ENCODE measurements at regions of chr1 and their contacts with region 1.

Region 1: DNA sequence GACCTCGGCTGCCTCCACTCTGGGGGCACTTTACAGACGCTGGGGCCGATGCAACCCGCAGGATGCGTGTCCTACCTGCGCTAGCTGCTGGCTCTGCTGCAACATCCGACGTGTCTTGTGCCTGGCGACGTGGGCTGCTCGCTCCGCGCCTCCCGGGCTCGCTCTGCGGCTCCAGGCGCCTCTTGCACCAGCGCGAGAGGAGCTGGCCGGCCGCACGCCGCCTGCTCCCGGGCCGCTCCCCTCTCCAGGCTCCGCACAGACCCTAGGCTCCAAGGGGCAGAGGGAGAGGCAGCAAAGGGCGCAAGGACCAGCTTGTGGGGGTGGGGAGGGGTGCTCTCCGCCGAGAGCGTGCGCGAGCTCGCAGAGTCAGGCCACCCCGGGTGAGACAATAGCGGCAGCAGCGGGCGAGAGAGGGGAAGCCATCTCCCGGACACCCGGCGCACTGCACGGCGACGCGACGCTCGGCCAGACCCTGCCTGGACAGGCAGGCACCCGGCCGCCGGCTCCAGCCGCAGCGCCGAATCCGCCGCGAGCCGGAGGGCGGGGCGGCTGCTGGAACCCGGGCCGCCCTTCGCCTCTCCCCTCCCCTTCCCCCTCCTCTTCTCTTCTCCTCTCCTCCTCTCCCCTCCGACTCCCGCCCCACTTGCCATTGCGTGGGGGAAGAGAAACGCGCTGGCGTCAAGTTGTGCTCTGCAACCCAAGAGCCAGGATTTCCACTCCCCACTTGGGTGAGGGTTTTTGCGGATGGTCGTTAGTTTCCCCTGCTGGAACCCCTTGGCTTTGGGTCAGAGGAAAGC is at the start of gene PIK3C2B:
- DNase-seq: peak; percentile 87
- ATAC-seq: peak; percentile 81
- H3K4me3 ChIP-seq: peak within 1 kb of the TSS; percentile 84 to 98 (median 92)
- H3K4me3 Mint-ChIP-seq: peak within 1 kb of the TSS; percentile 97
- H3K27ac ChIP-seq: peak within 1 kb of the TSS; percentile 78 to 79
- H3K27ac Mint-ChIP-seq: peak within 1 kb of the TSS; percentile 96
- H3K4me1 ChIP-seq: peaks cover 73 to 88% of the 10 kb centered on the region in 2 donors
- H3K4me1 Mint-ChIP-seq: peaks cover 80% of the 10 kb centered on the region
- H3K27me3 ChIP-seq: no peaks in the 10 kb centered on the region
- H3K27me3 Mint-ChIP-seq: no peaks in the 10 kb centered on the region
- CTCF ChIP-seq: peak; percentile 61
- total RNA-seq, gene PIK3C2B: 90.3 and 93.7 TPM in 2 replicates

Region 2: GRCh38 chr1:203638950-203639349 is 855.5 kb before region 1 on chr1:
- CTCF ChIA-PET with region 1: no interaction called
- POLR2A ChIA-PET with region 1: no interaction called
- intact Hi-C with region 1: no loop called
- DNase-seq: no peak
- ATAC-seq: no peak
- H3K4me3 ChIP-seq: no peak overlapping the region
- H3K4me3 Mint-ChIP-seq: no peak overlapping the region
- H3K27ac ChIP-seq: no peak overlapping the region
- H3K27ac Mint-ChIP-seq: no peak overlapping the region
- H3K4me1 ChIP-seq: peaks cover 10 to 12% of the 10 kb centered on the region in 2 donors
- H3K4me1 Mint-ChIP-seq: peaks cover 26% of the 10 kb centered on the region
- H3K27me3 ChIP-seq: no peaks in the 10 kb centered on the region
- H3K27me3 Mint-ChIP-seq: no peaks in the 10 kb centered on the region
- CTCF ChIP-seq: no peak

Region 3: GRCh38 chr1:204465546-204466415 is 28.7 kb before region 1 on chr1:
- CTCF ChIA-PET with region 1: interaction called, 1,884 read pairs
- POLR2A ChIA-PET with region 1: interaction called, 9 read pairs
- intact Hi-C with region 1: loop called (anchors 1 kb)
- DNase-seq: peak; percentile 57
- ATAC-seq: peak; percentile 49
- H3K4me3 ChIP-seq: peak overlapping the region in 1 of 5 experiments; percentile 2
- H3K4me3 Mint-ChIP-seq: peak overlapping the region; percentile 80
- H3K27ac ChIP-seq: peak overlapping the region; percentile 57 to 72
- H3K27ac Mint-ChIP-seq: peak overlapping the region; percentile 95
- H3K4me1 ChIP-seq: peaks cover 77 to 80% of the 10 kb centered on the region in 2 donors
- H3K4me1 Mint-ChIP-seq: peaks cover 84% of the 10 kb centered on the region
- H3K27me3 ChIP-seq: no peaks in the 10 kb centered on the region
- H3K27me3 Mint-ChIP-seq: no peaks in the 10 kb centered on the region
- CTCF ChIP-seq: no peak

Region 4: GRCh38 chr1:204480515-204480914 is 14.0 kb before region 1 on chr1:
- CTCF ChIA-PET with region 1: interaction called, 374 read pairs
- POLR2A ChIA-PET with region 1: interaction called, 46 read pairs
- intact Hi-C with region 1: loop called (anchors 1 kb)
- DNase-seq: peak; percentile 73
- ATAC-seq: peak; percentile 53
- H3K4me3 ChIP-seq: peak overlapping the region in 3 of 5 experiments; percentile 26 to 32 (median 32)
- H3K4me3 Mint-ChIP-seq: peak overlapping the region; percentile 71
- H3K27ac ChIP-seq: peak overlapping the region; percentile 78 to 95
- H3K27ac Mint-ChIP-seq: peak overlapping the region; percentile 98
- H3K4me1 ChIP-seq: peaks cover 93 to 94% of the 10 kb centered on the region in 2 donors
- H3K4me1 Mint-ChIP-seq: peaks cover 94% of the 10 kb centered on the region
- H3K27me3 ChIP-seq: no peaks in the 10 kb centered on the region
- H3K27me3 Mint-ChIP-seq: no peaks in the 10 kb centered on the region
- CTCF ChIP-seq: no peak

Region 5: GRCh38 chr1:204516180-204516879 is 21.9 kb after region 1 on chr1 and contains the start of gene MDM4:
- CTCF ChIA-PET with region 1: interaction called, 48 read pairs
- POLR2A ChIA-PET with region 1: interaction called, 15 read pairs
- intact Hi-C with region 1: no loop called
- DNase-seq: peak; percentile 97
- ATAC-seq: peak; percentile 78
- H3K4me3 ChIP-seq: peak within 1 kb of the TSS; percentile 75 to 96 (median 91)
- H3K4me3 Mint-ChIP-seq: no peak within 1 kb of the TSS
- H3K27ac ChIP-seq: peak within 1 kb of the TSS; percentile 95 to 97
- H3K27ac Mint-ChIP-seq: no peak within 1 kb of the TSS
- H3K4me1 ChIP-seq: peaks cover 83 to 92% of the 10 kb centered on the region in 2 donors
- H3K4me1 Mint-ChIP-seq: peaks cover 68% of the 10 kb centered on the region
- H3K27me3 ChIP-seq: no peaks in the 10 kb centered on the region
- H3K27me3 Mint-ChIP-seq: no peaks in the 10 kb centered on the region
- CTCF ChIP-seq: no peak
- total RNA-seq, gene MDM4: 374 and 378 TPM in 2 replicates

Measured in B cell (primary cell).